CD8-positive, alpha-beta memory T cell (primary cell): ENCODE measurements at regions of chr2 and their contacts with region 1.

Region 1: GRCh38 chr2:106104332-106105062 is 89.6 kb downstream of the UXS1 start:
- DNase-seq: peak; percentile 41 to 80 (median 60)
- H3K4me3 ChIP-seq: no peak overlapping the region
- H3K4me3 Mint-ChIP-seq: no peak overlapping the region
- H3K27ac ChIP-seq: no peak overlapping the region
- H3K27ac Mint-ChIP-seq: peak overlapping the region in 4 of 8 donors; percentile 19 to 88 (median 46)
- H3K4me1 ChIP-seq: no peaks in the 10 kb centered on the region
- H3K4me1 Mint-ChIP-seq: peaks cover 0 to 18% (median 2%) of the 10 kb centered on the region in 3 donors
- H3K27me3 ChIP-seq: no peaks in the 10 kb centered on the region
- H3K27me3 Mint-ChIP-seq: no peaks in the 10 kb centered on the region

Region 2: GRCh38 chr2:106542811-106543259 is 438.3 kb after region 1 on chr2:
- CTCF ChIA-PET with region 1: interaction called, 15 read pairs
- POLR2A ChIA-PET with region 1: no interaction called
- DNase-seq: peak; percentile 50 to 75 (median 57)
- H3K4me3 ChIP-seq: peak overlapping the region; percentile 32
- H3K4me3 Mint-ChIP-seq: peak overlapping the region in 6 of 7 donors; percentile 71 to 83 (median 73)
- H3K27ac ChIP-seq: no peak overlapping the region
- H3K27ac Mint-ChIP-seq: peak overlapping the region in 1 of 8 donors; percentile 61
- H3K4me1 ChIP-seq: no peaks in the 10 kb centered on the region
- H3K4me1 Mint-ChIP-seq: peaks cover 2 to 4% (median 3%) of the 10 kb centered on the region in 3 donors
- H3K27me3 ChIP-seq: peaks cover 11% of the 10 kb centered on the region
- H3K27me3 Mint-ChIP-seq: peaks cover 22 to 38% of the 10 kb centered on the region in 2 donors